HCT116 (cell line): ENCODE measurements at regions of chr4 and their contacts with region 1.

Region 1: DNA sequence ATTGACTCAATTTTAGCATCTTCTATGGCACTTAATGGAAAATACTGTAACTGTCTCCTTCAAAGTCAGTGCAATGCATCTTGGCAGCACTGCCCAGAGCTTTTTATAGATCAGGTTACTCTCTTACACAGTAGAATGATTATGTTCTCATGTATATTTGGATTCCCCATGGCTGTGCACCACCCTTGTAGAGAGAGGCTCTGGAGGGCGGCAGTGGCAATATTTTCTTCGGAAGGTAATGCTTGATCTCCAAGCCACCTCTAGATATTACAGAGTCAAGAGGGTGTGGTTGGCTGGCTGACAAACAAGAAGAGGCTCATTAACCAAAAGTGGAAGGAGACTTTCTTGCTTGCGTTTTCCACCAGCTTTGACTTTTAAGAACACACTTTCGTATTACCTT is 72.8 kb upstream of the ARSJ start:
- DNase-seq: no peak
- ATAC-seq: no peak
- H3K4me3 ChIP-seq: no peak overlapping the region
- H3K27ac ChIP-seq: no peak overlapping the region
- H3K4me1 ChIP-seq: no peaks in the 10 kb centered on the region
- H3K27me3 ChIP-seq: no peaks in the 10 kb centered on the region
- CTCF ChIP-seq: no peak
- POLR2A ChIP-seq: no peak
- RAD21 ChIP-seq: no peak

Region 2: GRCh38 chr4:113773014-113773413 is 279.2 kb before region 1 on chr4:
- CTCF ChIA-PET with region 1: no interaction called
- POLR2A ChIA-PET with region 1: no interaction called
- RAD21 ChIA-PET with region 1: no interaction called
- intact Hi-C with region 1: loop called (anchors 10 kb)
- DNase-seq: no peak
- ATAC-seq: no peak
- H3K4me3 ChIP-seq: no peak overlapping the region
- H3K27ac ChIP-seq: no peak overlapping the region
- H3K4me1 ChIP-seq: no peaks in the 10 kb centered on the region
- H3K27me3 ChIP-seq: no peaks in the 10 kb centered on the region
- CTCF ChIP-seq: no peak
- POLR2A ChIP-seq: no peak
- RAD21 ChIP-seq: no peak